Panc1 (cell line): ENCODE measurements at regions of chr4 and their contacts with region 1.

Region 1: GRCh38 chr4:44632089-44632488 is 19.3 kb downstream of the YIPF7 start:
- DNase-seq: no peak
- ATAC-seq: no peak
- H3K4me3 ChIP-seq: no peak overlapping the region
- H3K27ac ChIP-seq: no peak overlapping the region
- H3K4me1 ChIP-seq: no peaks in the 10 kb centered on the region
- H3K27me3 ChIP-seq: no peaks in the 10 kb centered on the region
- CTCF ChIP-seq: no peak

Region 2: GRCh38 chr4:42995343-42995944 is 1636.6 kb before region 1 on chr4:
- CTCF ChIA-PET with region 1: no interaction called
- POLR2A ChIA-PET with region 1: no interaction called
- in situ Hi-C with region 1: no loop called
- intact Hi-C with region 1: loop called (anchors 10 kb)
- DNase-seq: peak; percentile 8
- ATAC-seq: no peak
- H3K4me3 ChIP-seq: no peak overlapping the region
- H3K27ac ChIP-seq: no peak overlapping the region
- H3K4me1 ChIP-seq: no peaks in the 10 kb centered on the region
- H3K27me3 ChIP-seq: no peaks in the 10 kb centered on the region
- CTCF ChIP-seq: peak; percentile 66; the same call in 1 of the 2 replicates

Region 3: DNA sequence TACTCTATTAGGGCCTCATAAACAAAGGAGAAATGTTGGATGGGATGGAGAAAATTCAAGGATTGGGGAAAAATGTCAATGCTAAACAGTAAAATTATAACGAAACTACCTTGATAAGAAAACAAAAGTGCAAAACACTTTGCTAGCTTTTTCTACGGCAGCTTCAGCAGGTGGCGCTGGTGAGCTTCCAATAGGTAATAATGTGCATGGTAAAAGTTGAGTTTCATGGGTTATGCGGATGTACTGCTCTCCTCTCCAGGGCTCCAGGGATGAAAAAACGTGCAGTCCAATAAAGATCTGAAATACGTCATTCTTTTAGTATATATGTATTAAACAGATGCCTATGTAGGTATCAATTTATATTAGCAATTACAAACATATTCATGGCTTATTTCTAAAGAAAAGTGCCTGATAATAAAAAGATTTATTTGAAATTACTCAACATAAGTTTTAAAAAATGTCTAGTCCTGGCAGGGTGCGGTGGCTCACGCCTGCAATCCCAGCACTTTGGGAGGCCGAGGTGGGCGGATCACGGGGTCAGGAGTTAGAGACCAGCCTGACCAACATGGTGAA is 1500.0 kb before region 1 on chr4:
- CTCF ChIA-PET with region 1: no interaction called
- POLR2A ChIA-PET with region 1: no interaction called
- in situ Hi-C with region 1: no loop called
- intact Hi-C with region 1: loop called (anchors 5 kb)
- DNase-seq: no peak
- ATAC-seq: no peak
- H3K4me3 ChIP-seq: no peak overlapping the region
- H3K27ac ChIP-seq: no peak overlapping the region
- H3K4me1 ChIP-seq: no peaks in the 10 kb centered on the region
- H3K27me3 ChIP-seq: no peaks in the 10 kb centered on the region
- CTCF ChIP-seq: peak; percentile 74